ENCODE measurements at regions of chr5 and their contacts with region 1.

Region 1: DNA sequence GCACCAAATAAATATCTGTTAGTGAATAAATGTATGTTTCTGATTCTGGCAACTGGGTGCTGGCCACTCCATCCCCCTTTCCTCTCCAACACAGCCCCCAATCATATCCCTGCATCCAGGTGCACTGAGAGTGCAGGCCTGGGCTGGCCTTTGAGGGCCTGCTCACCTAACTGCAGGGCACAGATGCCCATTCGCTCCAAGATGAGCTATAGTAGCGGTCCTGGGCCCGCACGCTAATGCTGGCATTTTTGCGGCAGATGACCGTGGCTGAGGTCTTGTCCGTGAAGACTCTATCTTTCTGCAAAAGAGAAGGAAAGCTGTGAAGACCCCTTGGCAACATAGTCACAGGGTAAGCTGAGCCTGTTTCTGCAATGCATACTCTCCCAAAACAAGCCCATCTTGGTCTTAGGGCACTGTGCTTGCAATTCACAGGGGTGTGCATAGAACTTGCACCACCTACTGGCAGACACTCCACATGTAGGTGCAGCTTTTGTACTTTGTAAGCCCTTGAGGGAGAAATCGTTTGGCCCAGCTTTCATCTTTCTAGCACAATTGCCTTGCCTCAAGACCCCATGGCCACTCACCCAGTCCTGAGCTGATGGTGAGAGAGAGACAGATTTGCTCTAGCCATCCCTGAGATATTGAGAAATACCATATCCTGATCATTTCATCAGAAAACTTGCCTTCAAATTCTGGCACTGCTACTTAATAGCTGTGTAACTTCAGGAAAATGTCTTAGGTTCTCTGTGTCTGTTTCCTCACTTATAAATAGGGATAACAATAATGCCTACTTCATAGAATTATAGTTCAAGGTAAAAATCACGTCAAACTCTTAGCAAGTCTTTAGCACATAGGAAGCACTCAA is 13.5 kb downstream of the IL12B start:
- DNase-seq: no peak
- H3K4me3 ChIP-seq: no peak overlapping the region
- CTCF ChIP-seq: no peak
- POLR2A ChIP-seq: no peak

Region 2: DNA sequence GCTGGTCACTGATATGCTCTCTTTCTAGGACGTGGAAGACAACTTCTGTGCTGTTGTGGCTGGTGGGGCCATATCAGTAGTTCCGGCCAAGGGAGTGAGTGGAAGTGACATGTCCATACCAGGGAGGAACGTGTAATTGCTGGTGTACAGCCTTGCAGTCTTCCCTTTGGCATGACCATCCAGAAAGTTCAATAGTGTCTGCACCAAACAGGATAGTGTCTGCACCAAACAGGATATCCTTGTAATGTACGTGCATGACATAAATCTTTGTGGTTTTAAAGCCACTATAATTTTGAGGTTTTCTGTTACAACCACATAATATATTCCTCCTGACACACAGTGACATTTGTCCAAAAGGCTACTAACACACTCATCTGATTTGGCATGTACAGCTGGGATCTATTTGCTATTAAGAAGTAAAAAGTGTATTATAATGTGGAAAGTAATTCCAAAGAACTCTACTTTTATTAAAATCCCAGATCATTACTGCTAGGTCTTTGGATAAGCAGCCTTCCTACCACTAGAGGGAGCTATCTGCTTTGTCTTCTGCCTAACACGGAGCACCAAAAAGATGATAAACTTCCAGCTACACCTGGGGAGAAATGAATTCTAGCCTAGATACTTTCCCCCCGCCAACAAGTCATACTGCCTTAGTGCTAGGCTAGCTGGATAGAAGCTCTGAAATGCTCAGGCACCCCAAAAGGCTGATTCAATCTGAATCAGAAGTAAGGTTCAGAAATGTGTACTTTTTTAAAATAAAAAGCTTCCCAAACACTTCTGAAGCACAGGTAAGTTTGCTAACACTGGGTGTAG is 160.1 kb before region 1 on chr5:
- intact Hi-C with region 1: loop called (anchors 10 kb)
- DNase-seq: peak in 1 of 2 donors; percentile 38
- H3K4me3 ChIP-seq: no peak overlapping the region
- CTCF ChIP-seq: no peak
- POLR2A ChIP-seq: no peak

Region 3: GRCh38 chr5:159469496-159470372 is 153.0 kb after region 1 on chr5:
- intact Hi-C with region 1: no loop called
- DNase-seq: no peak
- H3K4me3 ChIP-seq: no peak overlapping the region
- CTCF ChIP-seq: no peak
- POLR2A ChIP-seq: no peak